ENCODE measurements at regions of chr10 and their contacts with region 1.

Region 1: DNA sequence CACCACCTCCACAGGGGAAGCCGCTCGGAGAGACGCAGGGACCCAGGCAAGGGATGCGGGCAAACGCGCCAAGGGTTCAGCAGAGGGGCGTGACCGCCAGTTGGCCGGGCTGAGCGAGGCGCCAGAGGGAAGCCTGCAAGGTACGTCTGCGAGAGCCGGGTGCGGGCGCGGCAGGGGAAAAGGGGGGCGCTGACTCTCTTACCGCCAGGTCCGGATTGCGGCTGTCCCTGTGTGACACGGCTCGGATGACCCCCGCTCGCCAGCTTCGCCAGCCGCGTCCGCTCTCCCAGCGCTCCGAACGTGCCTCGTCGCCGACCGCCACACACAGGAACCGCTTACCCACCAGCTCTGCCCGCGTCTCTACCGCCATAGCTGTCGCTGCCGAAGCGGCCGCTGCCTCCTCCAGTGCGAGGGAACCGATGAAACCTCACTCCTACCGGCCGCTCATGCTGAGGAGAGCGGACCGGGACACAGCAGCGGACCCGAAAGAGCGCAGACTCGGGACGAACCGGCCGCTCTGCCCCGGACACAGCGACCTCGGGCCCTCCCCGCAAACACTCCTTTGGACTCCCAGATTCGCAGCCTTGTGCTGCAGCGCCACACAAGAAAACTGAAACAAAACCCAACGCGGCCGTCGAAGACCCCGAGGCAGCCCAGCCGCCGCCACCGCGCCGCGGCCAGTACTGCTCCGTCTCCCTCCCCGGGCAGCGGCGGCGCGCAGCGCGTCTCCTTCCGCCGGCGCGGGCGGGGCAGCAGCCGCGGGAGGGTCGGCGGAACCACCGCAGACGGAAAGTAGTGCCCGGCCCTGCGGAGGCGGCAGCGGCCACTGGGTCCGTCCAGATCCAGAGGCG is at the start of gene JMJD1C:
- DNase-seq: peak; percentile 79
- H3K4me3 ChIP-seq: peak within 1 kb of the TSS; percentile 71
- H3K27ac ChIP-seq: peak within 1 kb of the TSS; percentile 76
- H3K4me1 ChIP-seq: no peaks in the 10 kb centered on the region
- H3K27me3 ChIP-seq: no peaks in the 10 kb centered on the region
- CTCF ChIP-seq: no peak
- total RNA-seq, gene JMJD1C: 37.7 to 72.2 TPM

Region 2: DNA sequence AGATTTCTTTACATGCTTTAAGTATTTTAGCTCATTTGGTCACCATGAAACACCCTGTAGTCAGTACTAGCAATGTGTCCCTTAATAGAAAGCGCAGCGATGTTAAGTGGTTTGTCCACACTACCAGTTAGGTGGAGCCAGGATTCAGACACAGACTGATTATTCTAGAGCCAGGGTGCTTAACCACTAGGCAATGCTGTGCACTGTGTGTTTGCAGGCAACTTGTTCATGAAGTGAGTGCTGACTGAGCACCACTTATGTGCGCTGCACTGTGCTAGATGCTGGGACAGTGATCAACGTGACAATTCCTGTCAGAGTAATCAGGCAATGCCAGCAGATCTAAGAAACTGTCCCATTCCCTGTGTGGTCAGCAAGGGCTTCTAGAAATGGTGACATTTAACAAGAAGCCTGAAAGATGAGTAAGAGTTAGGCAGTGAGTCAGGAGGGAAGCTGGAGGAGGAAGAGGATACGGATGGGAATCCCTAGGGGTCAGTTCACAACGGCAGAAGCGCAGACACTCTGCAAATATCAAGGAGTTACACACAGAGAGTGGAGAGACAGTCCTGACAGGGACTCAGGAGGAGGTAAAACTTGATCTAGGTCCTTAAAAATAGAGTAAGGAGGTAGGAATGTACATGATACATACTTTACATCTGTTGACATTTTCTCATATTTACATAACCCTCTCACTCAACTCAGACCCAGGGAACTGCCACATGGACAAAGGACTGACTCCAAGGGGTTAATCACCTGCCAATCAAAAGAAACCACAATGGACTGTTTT is 579.6 kb before region 1 on chr10:
- intact Hi-C with region 1: no loop called
- DNase-seq: no peak
- H3K4me3 ChIP-seq: no peak overlapping the region
- H3K27ac ChIP-seq: no peak overlapping the region
- H3K4me1 ChIP-seq: no peaks in the 10 kb centered on the region
- H3K27me3 ChIP-seq: no peaks in the 10 kb centered on the region
- CTCF ChIP-seq: no peak

Region 3: DNA sequence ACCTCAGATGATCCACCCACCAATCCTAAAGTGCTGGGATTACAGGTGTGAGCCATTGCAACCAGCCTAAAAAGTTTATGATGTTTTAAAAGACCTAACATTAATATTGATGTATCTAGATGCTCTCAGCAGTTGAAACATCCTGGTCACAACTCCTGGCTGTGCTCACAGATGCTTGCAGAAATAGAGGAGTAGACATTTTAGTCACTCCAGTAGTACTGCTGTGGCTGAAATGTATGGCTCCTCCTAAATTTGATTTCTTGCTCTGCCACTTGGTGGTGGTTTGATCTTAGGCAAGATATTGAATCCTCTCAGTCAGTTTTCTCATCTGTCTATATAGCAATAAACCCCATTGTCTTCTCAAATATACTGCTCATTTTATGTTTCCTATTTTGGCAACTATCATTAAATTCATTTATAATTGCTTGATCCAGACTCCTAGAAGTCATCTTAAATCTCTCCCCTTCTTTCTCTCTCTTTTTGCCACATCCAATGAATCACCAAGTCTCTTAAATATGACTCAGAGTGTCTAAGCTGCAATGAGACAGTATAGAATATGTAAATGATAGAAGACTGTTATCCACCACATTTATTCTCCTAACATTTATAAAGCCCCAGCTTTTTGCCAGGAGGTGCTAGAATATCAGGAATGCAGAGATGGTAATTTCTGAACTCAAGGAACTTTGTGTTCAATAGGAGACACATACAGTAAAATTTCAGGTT is 410.5 kb before region 1 on chr10:
- intact Hi-C with region 1: no loop called
- DNase-seq: no peak
- H3K4me3 ChIP-seq: no peak overlapping the region
- H3K27ac ChIP-seq: no peak overlapping the region
- H3K4me1 ChIP-seq: no peaks in the 10 kb centered on the region
- H3K27me3 ChIP-seq: no peaks in the 10 kb centered on the region
- CTCF ChIP-seq: no peak

Region 4: GRCh38 chr10:63521416-63522276 is 56.1 kb after region 1 on chr10:
- intact Hi-C with region 1: loop called (anchors 5 kb)
- DNase-seq: peak; percentile 63
- H3K4me3 ChIP-seq: peak overlapping the region; percentile 63
- H3K27ac ChIP-seq: peak overlapping the region; percentile 96
- H3K4me1 ChIP-seq: no peaks in the 10 kb centered on the region
- H3K27me3 ChIP-seq: no peaks in the 10 kb centered on the region
- CTCF ChIP-seq: no peak